Transverse colon (tissue), 4 donors: ENCODE measurements at regions of chr15 and their contacts with region 1.

Region 1: GRCh38 chr15:72473614-72474465 is at the start of gene ARIH1:
- DNase-seq: peak; percentile 98
- H3K4me3 ChIP-seq: peak within 1 kb of the TSS; percentile 69 to 89 (median 79)
- H3K27ac ChIP-seq: peak within 1 kb of the TSS; percentile 96 to 100 (median 98)
- H3K4me1 ChIP-seq: peaks cover 24 to 44% (median 31%) of the 10 kb centered on the region in 4 donors
- H3K27me3 ChIP-seq: no peaks in the 10 kb centered on the region
- CTCF ChIP-seq: peak in 4 of 5 experiments; percentile 11 to 29 (median 22)
- EP300 ChIP-seq: peak; percentile 50
- POLR2A ChIP-seq: peak; percentile 99
- total RNA-seq, gene ARIH1: 15.7 to 108 (median 53.1) TPM

Region 2: GRCh38 chr15:72375847-72376581 is 97.8 kb before region 1 on chr15 and contains the start of gene HEXA:
- in situ Hi-C with region 1: loop called in 1 of 4 experiments (anchors 5 kb)
- intact Hi-C with region 1: loop called (anchors 5 kb)
- DNase-seq: peak; percentile 97
- H3K4me3 ChIP-seq: peak within 1 kb of the TSS; percentile 57 to 65 (median 61)
- H3K27ac ChIP-seq: peak within 1 kb of the TSS; percentile 90 to 92 (median 92)
- H3K4me1 ChIP-seq: peaks cover 8 to 36% (median 18%) of the 10 kb centered on the region in 4 donors
- H3K27me3 ChIP-seq: no peaks in the 10 kb centered on the region
- CTCF ChIP-seq: peak in 2 of 5 experiments; percentile 10 to 21
- EP300 ChIP-seq: peak; percentile 75
- POLR2A ChIP-seq: peak; percentile 92
- total RNA-seq, gene HEXA: 19.9 to 69.9 (median 50.9) TPM

Region 3: GRCh38 chr15:72585476-72586082 is 111.7 kb after region 1 on chr15:
- in situ Hi-C with region 1: no loop called
- intact Hi-C with region 1: no loop called
- DNase-seq: no peak
- H3K4me3 ChIP-seq: no peak overlapping the region
- H3K27ac ChIP-seq: no peak overlapping the region
- H3K4me1 ChIP-seq: no peaks in the 10 kb centered on the region
- H3K27me3 ChIP-seq: no peaks in the 10 kb centered on the region
- CTCF ChIP-seq: no peak
- EP300 ChIP-seq: no peak
- POLR2A ChIP-seq: no peak

Region 4: DNA sequence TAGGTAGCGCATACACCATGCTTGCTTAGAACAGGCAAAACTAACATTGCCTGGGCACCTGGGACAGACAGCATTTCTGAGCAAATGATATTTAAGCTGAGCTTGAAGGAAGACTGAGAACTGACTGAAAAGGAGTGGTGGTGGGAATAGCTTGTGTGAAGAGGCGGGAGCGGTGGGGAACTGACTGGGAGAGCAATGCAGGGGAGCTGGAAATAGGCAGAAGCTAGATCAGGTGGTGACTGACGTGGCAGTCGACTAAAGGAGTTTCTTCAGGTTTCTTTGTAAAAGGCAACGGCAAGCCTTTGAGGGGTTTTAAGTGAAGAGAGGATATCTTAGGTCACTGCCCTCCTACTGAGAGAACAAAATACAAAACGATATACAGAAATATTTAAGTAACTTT is 640.2 kb after region 1 on chr15:
- in situ Hi-C with region 1: no loop called
- intact Hi-C with region 1: no loop called
- DNase-seq: no peak
- H3K4me3 ChIP-seq: no peak overlapping the region
- H3K27ac ChIP-seq: no peak overlapping the region
- H3K4me1 ChIP-seq: peaks cover 3 to 43% (median 18%) of the 10 kb centered on the region in 4 donors
- H3K27me3 ChIP-seq: no peaks in the 10 kb centered on the region
- CTCF ChIP-seq: no peak
- EP300 ChIP-seq: no peak
- POLR2A ChIP-seq: no peak

Region 5: GRCh38 chr15:73183071-73183470 is 709.2 kb after region 1 on chr15:
- in situ Hi-C with region 1: no loop called
- intact Hi-C with region 1: no loop called
- DNase-seq: no peak
- H3K4me3 ChIP-seq: no peak overlapping the region
- H3K27ac ChIP-seq: no peak overlapping the region
- H3K4me1 ChIP-seq: no peaks in the 10 kb centered on the region
- H3K27me3 ChIP-seq: no peaks in the 10 kb centered on the region
- CTCF ChIP-seq: no peak
- EP300 ChIP-seq: no peak
- POLR2A ChIP-seq: no peak